ENCODE measurements at regions of chr7 and their contacts with region 1.

Region 1: DNA sequence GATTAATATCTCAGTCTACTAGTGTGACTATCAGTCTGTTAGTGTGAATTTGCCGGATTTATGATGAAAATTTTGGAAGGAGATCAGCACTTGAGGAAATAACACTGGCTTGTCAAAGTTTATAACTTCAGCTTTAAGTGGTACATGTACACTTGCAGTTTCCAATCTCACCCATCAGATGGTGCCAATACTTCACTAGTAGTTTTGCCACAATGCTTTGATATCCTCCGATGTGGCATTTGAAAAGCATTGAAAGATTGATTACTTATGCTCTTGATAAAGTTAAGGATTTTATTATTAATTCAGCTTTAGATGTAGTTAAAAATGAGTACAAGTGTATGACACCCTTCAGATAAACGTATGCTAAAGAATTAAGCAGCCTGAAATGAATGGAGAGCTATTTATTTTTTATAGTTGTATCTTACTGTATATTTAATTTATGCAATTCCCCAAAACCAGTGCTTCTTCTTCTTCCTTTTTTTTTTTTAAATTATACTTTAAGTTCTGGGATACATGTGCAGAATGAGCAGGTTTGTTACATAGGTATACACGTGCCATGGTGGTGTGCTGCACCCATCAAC is 98.2 kb downstream of the ANLN start:
- DNase-seq: peak; percentile 67
- H3K4me3 ChIP-seq: no peak overlapping the region
- H3K27ac ChIP-seq: no peak overlapping the region
- H3K4me1 ChIP-seq: no peaks in the 10 kb centered on the region
- H3K27me3 ChIP-seq: peaks cover 50% of the 10 kb centered on the region
- CTCF ChIP-seq: peak; percentile 74

Region 2: DNA sequence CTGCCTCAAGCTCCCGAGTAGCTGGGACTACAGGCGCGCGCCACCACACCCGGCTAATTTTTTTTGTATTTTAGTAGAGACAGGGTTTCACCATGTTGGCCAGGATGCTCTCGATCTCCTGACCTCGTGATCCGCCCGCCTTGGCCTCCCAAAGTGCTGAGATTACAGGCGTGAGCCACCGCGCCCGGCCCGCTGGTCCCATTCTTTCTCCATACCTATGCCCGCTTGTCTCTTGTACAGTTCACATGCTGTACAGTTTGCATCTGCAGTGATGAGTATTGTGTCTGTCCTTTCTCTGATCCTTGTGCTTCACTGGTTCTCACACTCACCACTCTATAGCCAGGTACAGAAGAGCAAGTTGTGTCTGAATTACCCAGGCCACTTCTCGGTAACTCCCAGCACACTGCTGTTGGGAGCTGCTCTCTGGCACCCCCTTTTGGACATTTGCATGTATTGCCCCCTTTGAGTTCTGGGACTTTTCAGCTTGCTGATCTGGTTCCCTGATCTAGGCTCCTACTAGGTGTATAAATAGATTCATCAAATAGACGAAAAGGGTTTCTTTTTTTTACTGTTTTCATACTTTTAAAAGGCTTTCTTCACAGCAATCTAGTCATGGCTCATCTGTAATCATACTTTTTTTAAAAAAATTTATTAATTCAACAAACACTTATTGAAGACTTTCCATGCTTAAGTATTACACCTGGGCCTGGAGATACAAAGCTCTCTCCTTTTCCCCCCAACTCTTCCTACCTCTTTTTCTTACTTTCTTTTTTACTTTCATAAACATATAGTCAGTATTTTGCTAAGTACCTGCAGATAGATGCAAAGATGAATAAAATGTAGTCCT is 183.0 kb after region 1 on chr7:
- CTCF ChIA-PET with region 1: interaction called, 10 read pairs
- POLR2A ChIA-PET with region 1: no interaction called
- intact Hi-C with region 1: loop called (anchors 1 kb)
- DNase-seq: peak; percentile 68
- H3K4me3 ChIP-seq: no peak overlapping the region
- H3K27ac ChIP-seq: no peak overlapping the region
- H3K4me1 ChIP-seq: no peaks in the 10 kb centered on the region
- H3K27me3 ChIP-seq: peaks cover 6% of the 10 kb centered on the region
- CTCF ChIP-seq: peak; percentile 87

Region 3: GRCh38 chr7:36967387-36967786 is 479.5 kb after region 1 on chr7:
- CTCF ChIA-PET with region 1: no interaction called
- POLR2A ChIA-PET with region 1: no interaction called
- intact Hi-C with region 1: loop called (anchors 5 kb)
- DNase-seq: peak; percentile 48
- H3K4me3 ChIP-seq: no peak overlapping the region
- H3K27ac ChIP-seq: no peak overlapping the region
- H3K4me1 ChIP-seq: no peaks in the 10 kb centered on the region
- H3K27me3 ChIP-seq: no peaks in the 10 kb centered on the region
- CTCF ChIP-seq: peak; percentile 75

Measured in A673 (cell line).